A549 (cell line): ENCODE measurements at regions of chr11 and their contacts with region 1.

Region 1: GRCh38 chr11:44057340-44057739 is 8.7 kb upstream of the ACCS start:
- DNase-seq: no peak
- ATAC-seq: peak; percentile 41 to 53; a peak in 2 of 6 replicates
- H3K4me3 ChIP-seq: no peak overlapping the region
- H3K27ac ChIP-seq: no peak overlapping the region
- H3K4me1 ChIP-seq: no peaks in the 10 kb centered on the region
- CTCF ChIP-seq: no peak
- EP300 ChIP-seq: no peak
- POLR2A ChIP-seq: no peak
- RAD21 ChIP-seq: no peak

Region 2: GRCh38 chr11:44036811-44037657 is 20.3 kb before region 1 on chr11:
- CTCF ChIA-PET with region 1: interaction called, 12 read pairs
- POLR2A ChIA-PET with region 1: no interaction called
- DNase-seq: peak; percentile 54 to 72
- ATAC-seq: peak; percentile 90 to 98
- H3K4me3 ChIP-seq: no peak overlapping the region
- H3K27ac ChIP-seq: no peak overlapping the region
- H3K4me1 ChIP-seq: no peaks in the 10 kb centered on the region
- CTCF ChIP-seq: peak; percentile 66
- EP300 ChIP-seq: no peak
- POLR2A ChIP-seq: no peak
- RAD21 ChIP-seq: peak; percentile 85 to 89

Region 3: GRCh38 chr11:44149651-44150050 is 92.3 kb after region 1 on chr11:
- CTCF ChIA-PET with region 1: no interaction called
- POLR2A ChIA-PET with region 1: no interaction called
- DNase-seq: no peak
- ATAC-seq: no peak
- H3K4me3 ChIP-seq: no peak overlapping the region
- H3K27ac ChIP-seq: no peak overlapping the region
- H3K4me1 ChIP-seq: no peaks in the 10 kb centered on the region; the same call in 2 of the 3 replicates
- CTCF ChIP-seq: no peak
- EP300 ChIP-seq: no peak
- POLR2A ChIP-seq: no peak
- RAD21 ChIP-seq: no peak